ENCODE measurements at regions of chr12 and their contacts with region 1.

Region 1: DNA sequence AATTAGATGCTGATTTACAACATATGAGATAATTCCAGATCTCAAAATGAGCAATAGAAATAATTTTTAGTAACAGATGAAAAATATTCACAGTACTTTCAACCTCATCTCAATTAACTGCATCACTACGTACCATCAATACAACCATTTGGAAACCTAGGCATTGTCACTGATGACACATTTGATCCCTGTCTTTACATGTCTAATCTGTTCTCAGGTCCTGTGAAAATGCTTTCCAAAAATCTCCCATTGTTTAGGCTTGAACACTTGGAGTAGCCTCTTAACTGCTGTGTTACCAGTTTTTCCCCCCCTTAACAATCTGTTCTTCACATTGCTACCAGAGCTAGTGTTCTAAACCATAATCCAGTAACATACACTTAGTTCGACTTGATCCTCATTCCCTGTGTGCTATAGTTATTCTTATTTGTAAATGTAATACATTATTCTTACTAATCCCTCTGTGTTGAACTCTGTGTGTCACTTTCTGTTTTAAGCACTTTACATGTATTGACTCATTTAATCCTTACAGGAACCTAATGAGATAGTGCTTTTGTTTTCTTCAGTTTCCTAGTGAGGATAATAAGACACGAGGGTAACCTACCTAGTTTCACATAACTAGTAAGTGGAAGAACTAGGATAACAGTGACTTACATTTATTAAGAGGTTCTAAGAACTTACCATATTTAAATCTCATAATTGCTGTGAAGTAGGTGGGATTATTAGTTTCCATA is 41.7 kb downstream of the LARP4 start:
- H3K4me3 Mint-ChIP-seq: no peak overlapping the region
- H3K27ac Mint-ChIP-seq: no peak overlapping the region
- H3K4me1 Mint-ChIP-seq: no peaks in the 10 kb centered on the region
- H3K27me3 Mint-ChIP-seq: no peaks in the 10 kb centered on the region

Region 2: GRCh38 chr12:49609059-49609745 is 833.1 kb before region 1 on chr12:
- intact Hi-C with region 1: no loop called
- H3K4me3 Mint-ChIP-seq: no peak overlapping the region
- H3K27ac Mint-ChIP-seq: no peak overlapping the region
- H3K4me1 Mint-ChIP-seq: peaks cover 6% of the 10 kb centered on the region
- H3K27me3 Mint-ChIP-seq: peaks cover 20% of the 10 kb centered on the region

Region 3: DNA sequence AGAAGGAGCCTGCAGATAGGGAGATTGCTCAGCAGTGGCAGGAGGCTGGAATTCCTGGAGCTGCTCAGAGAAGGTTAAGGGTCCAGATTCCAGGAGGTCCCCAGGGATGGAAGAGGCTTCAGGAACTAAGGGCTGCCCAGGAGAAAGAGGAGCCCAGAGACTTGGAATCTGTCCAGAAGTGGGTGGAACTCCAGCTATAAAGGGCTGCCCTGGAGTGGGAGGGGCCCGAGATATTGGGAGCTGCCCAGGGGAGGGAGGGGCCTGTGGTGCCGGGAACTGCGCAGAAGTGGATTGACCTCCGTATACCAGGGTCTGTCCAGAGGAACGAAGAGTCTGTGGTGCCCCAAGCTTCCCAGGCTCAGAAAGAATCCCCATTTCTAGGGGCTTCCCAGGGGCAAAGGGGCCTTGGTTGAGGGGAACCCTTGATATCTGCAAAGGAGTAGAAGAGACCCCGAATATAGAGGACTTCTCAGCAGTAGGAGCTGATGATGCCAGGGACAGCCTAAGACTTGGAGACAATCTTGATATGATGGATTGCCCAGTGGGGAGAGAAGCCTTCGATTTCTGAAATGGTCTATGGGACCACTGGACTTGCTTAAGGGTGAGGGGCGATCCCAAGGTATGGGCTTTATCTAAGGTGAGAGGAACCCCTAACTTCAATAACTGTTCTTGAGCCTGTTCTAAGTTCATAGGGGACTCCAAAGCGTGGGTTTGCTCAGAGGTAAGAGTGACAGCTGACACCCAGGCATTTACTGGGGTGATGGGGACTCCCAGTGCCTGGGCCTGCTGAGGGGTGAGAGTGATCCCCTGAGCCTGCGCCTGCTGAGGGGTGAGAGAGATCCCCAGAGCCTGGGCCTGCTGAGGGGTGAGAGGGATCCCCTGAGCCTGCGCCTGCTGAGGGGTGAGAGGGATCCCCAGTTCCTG is 91.0 kb before region 1 on chr12:
- intact Hi-C with region 1: no loop called
- H3K4me3 Mint-ChIP-seq: no peak overlapping the region
- H3K27ac Mint-ChIP-seq: no peak overlapping the region
- H3K4me1 Mint-ChIP-seq: no peaks in the 10 kb centered on the region
- H3K27me3 Mint-ChIP-seq: no peaks in the 10 kb centered on the region

Region 4: GRCh38 chr12:50568338-50569091 is 126.2 kb after region 1 on chr12:
- intact Hi-C with region 1: no loop called
- H3K4me3 Mint-ChIP-seq: peak overlapping the region; percentile 60
- H3K27ac Mint-ChIP-seq: peak overlapping the region; percentile 77
- H3K4me1 Mint-ChIP-seq: peaks cover 79% of the 10 kb centered on the region
- H3K27me3 Mint-ChIP-seq: no peaks in the 10 kb centered on the region

Region 5: GRCh38 chr12:50734409-50735263 is 292.3 kb after region 1 on chr12:
- intact Hi-C with region 1: loop called (anchors 10 kb)
- H3K4me3 Mint-ChIP-seq: no peak overlapping the region
- H3K27ac Mint-ChIP-seq: no peak overlapping the region
- H3K4me1 Mint-ChIP-seq: no peaks in the 10 kb centered on the region
- H3K27me3 Mint-ChIP-seq: no peaks in the 10 kb centered on the region

Measured in dendritic cell treated with granulocyte-macrophage colony-stimulating factor and Interleukin-4, amounts not matched to agents 40 ng/mL and 50 ng/mL, for 4 days (primary cell).